OCI-LY7 (cell line): ENCODE measurements at regions of chr19 and their contacts with region 1.

Region 1: GRCh38 chr19:58451358-58452101 is at the start of gene ZNF324B:
- DNase-seq: peak; percentile 98
- H3K4me3 ChIP-seq: peak within 1 kb of the TSS; percentile 73
- H3K27ac ChIP-seq: no peak within 1 kb of the TSS
- H3K4me1 ChIP-seq: no peaks in the 10 kb centered on the region
- CTCF ChIP-seq: 0 out of 2 replicates have a peak, but pooled peaks have one; percentile 32
- total RNA-seq, gene ZNF324B: 10.6 and 13.8 TPM in 2 replicates

Region 2: DNA sequence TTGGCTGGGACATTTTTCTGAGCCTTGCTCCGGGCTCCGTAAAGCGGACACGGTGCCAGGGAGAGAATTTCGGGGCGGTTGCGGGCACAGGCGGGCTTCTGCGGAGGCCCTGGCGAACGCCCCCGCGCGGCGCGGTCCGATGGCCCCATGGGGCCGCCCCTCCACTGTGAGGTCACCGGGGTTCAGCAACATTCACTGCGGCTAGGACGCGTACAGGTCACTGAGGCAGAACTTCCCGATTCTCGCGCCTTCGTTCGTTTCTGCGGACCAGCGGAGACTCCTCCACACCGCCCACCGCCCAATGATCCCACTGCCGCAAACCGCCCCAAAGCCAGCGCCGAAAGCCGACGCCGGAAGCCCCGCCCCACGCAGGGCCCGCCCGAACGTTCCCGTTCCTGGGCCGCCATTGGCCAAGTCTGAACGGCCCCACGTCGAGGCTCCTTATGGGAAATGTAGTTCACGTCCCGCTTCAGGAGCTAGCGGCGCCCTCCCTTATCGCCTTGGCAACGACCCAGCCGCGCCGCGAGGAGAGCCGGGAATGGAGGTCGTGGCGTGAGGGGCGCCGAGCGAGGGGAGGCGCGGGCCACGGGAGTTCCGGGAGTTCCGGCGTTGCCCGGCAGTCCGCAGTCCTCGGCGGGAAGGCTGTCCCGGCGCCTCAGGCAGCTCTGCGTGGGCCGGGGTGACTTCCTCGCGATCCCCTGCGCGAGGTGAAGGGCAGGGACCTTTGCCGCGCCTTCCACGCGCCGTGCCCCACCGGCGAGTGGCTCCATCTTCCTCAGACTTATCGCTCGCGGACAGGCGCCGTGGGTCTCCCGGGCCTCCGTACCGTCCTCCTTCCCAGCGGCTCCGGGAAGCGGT is 43.1 kb before region 1 on chr19 and contains the start of gene ZNF584:
- CTCF ChIA-PET with region 1: no interaction called
- POLR2A ChIA-PET with region 1: no interaction called
- intact Hi-C with region 1: loop called (anchors 1 kb)
- DNase-seq: peak; percentile 97
- H3K4me3 ChIP-seq: peak within 1 kb of the TSS; percentile 83
- H3K27ac ChIP-seq: peak within 1 kb of the TSS; percentile 47
- H3K4me1 ChIP-seq: peaks cover 20% of the 10 kb centered on the region
- CTCF ChIP-seq: peak; percentile 45
- total RNA-seq, gene ZNF584: 9.8 and 12.4 TPM in 2 replicates